Activated CD4-positive, alpha-beta T cell treated with anti-CD3 and anti-CD28 coated beads, Interleukin-2, amount 10 ng/mL, durations not matched to agents 24 days and 14 days (primary cell): ENCODE measurements at regions of chr6 and their contacts with region 1.

Region 1: GRCh38 chr6:138692058-138692977 is 81.3 kb upstream of the CCDC28A start:
- DNase-seq: peak; percentile 88
- H3K4me3 Mint-ChIP-seq: peak overlapping the region; percentile 64
- H3K27ac Mint-ChIP-seq: no peak overlapping the region
- H3K4me1 Mint-ChIP-seq: peaks cover 3% of the 10 kb centered on the region
- H3K27me3 Mint-ChIP-seq: peaks cover 56% of the 10 kb centered on the region

Region 2: GRCh38 chr6:138609801-138610430 is 82.4 kb before region 1 on chr6:
- intact Hi-C with region 1: no loop called
- DNase-seq: no peak
- H3K4me3 Mint-ChIP-seq: no peak overlapping the region
- H3K27ac Mint-ChIP-seq: no peak overlapping the region
- H3K4me1 Mint-ChIP-seq: no peaks in the 10 kb centered on the region
- H3K27me3 Mint-ChIP-seq: peaks cover 14% of the 10 kb centered on the region

Region 3: GRCh38 chr6:138654715-138655634 is 37.3 kb before region 1 on chr6:
- intact Hi-C with region 1: loop called (anchors 2 kb)
- DNase-seq: peak; percentile 61
- H3K4me3 Mint-ChIP-seq: no peak overlapping the region
- H3K27ac Mint-ChIP-seq: no peak overlapping the region
- H3K4me1 Mint-ChIP-seq: peaks cover 13% of the 10 kb centered on the region
- H3K27me3 Mint-ChIP-seq: peaks cover 25% of the 10 kb centered on the region

Region 4: DNA sequence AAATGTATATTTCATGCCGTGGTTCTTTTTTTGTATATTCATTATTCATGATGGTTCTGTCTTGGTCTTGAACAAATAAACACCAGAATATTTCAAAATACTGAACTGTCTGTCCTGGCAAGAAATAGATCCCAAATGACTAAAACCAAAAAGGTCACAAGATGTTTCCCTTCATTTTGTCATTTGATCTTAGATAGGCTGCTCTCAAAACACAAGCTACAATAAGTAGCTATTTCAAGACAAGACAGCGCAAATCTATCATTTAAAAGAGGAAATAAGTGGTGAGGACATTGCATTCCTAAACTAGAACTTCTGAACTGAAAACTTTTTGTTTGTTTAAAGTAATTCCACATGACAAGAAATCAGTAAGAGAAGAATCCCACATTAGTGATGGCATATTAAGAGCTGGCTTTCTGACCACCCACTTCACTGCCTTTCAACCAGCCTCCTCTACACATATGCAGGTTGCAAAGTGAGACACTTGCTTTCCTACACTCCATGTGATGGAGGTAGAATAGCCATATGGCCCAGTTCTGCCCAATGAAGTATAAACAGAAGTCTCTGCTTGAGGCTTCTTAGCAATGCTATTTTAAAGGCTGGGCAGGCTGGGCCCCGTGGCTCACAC is 26.8 kb after region 1 on chr6:
- intact Hi-C with region 1: no loop called
- DNase-seq: no peak
- H3K4me3 Mint-ChIP-seq: no peak overlapping the region
- H3K27ac Mint-ChIP-seq: no peak overlapping the region
- H3K4me1 Mint-ChIP-seq: peaks cover 4% of the 10 kb centered on the region
- H3K27me3 Mint-ChIP-seq: peaks cover 13% of the 10 kb centered on the region

Region 5: GRCh38 chr6:138736640-138737039 is 44.3 kb after region 1 on chr6:
- intact Hi-C with region 1: no loop called
- DNase-seq: no peak
- H3K4me3 Mint-ChIP-seq: no peak overlapping the region
- H3K27ac Mint-ChIP-seq: no peak overlapping the region
- H3K4me1 Mint-ChIP-seq: no peaks in the 10 kb centered on the region
- H3K27me3 Mint-ChIP-seq: no peaks in the 10 kb centered on the region

Region 6: GRCh38 chr6:138765896-138766655 is 73.8 kb after region 1 on chr6:
- intact Hi-C with region 1: loop called (anchors 1 kb)
- DNase-seq: no peak
- H3K4me3 Mint-ChIP-seq: no peak overlapping the region
- H3K27ac Mint-ChIP-seq: no peak overlapping the region
- H3K4me1 Mint-ChIP-seq: peaks cover 9% of the 10 kb centered on the region
- H3K27me3 Mint-ChIP-seq: no peaks in the 10 kb centered on the region

Region 7: GRCh38 chr6:139364302-139364981 is 672.1 kb after region 1 on chr6:
- intact Hi-C with region 1: loop called (anchors 5 kb)
- DNase-seq: peak; percentile 68
- H3K4me3 Mint-ChIP-seq: no peak overlapping the region
- H3K27ac Mint-ChIP-seq: no peak overlapping the region
- H3K4me1 Mint-ChIP-seq: peaks cover 30% of the 10 kb centered on the region
- H3K27me3 Mint-ChIP-seq: peaks cover 4% of the 10 kb centered on the region